Common myeloid progenitor, CD34-positive (primary cell): ENCODE measurements at regions of chr5 and their contacts with region 1.

Region 1: DNA sequence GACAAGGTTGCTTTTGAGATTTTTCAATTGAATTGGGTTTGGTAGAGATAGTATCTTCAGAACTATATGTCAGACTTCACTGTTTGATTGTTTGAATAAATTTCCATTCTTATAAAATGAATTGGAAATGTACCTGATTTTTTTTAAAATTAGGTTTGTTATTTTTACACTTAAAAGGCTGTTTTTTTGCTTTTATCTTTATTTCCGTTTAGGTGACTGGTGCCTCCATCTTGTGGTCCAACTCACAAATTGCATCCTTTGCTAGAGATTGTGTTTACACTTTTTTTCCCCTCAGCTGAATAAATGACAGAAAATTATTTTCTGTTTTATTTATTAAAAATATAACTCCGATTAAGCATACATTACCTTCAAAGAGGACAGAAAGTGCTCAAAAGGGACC is 15.6 kb downstream of the NDUFAF2 start:
- DNase-seq: peak; percentile 29 to 63 (median 55)
- H3K4me3 ChIP-seq: no peak overlapping the region
- H3K27ac ChIP-seq: no peak overlapping the region
- H3K4me1 ChIP-seq: peaks cover 0 to 5% (median 0%) of the 10 kb centered on the region in 4 experiments
- H3K27me3 ChIP-seq: no peaks in the 10 kb centered on the region

Region 2: GRCh38 chr5:60944904-60945812 is 15.4 kb before region 1 on chr5 and contains the starts of genes ERCC8 and NDUFAF2:
- CTCF ChIA-PET with region 1: interaction called, 18 read pairs
- POLR2A ChIA-PET with region 1: no interaction called
- DNase-seq: peak; percentile 89 to 96 (median 95)
- H3K4me3 ChIP-seq: peak within 1 kb of the TSS; percentile 71 to 99 (median 96)
- H3K27ac ChIP-seq: peak within 1 kb of the TSS; percentile 67 to 84
- H3K4me1 ChIP-seq: peaks cover 16 to 25% (median 21%) of the 10 kb centered on the region in 4 experiments
- H3K27me3 ChIP-seq: no peaks in the 10 kb centered on the region

Region 3: DNA sequence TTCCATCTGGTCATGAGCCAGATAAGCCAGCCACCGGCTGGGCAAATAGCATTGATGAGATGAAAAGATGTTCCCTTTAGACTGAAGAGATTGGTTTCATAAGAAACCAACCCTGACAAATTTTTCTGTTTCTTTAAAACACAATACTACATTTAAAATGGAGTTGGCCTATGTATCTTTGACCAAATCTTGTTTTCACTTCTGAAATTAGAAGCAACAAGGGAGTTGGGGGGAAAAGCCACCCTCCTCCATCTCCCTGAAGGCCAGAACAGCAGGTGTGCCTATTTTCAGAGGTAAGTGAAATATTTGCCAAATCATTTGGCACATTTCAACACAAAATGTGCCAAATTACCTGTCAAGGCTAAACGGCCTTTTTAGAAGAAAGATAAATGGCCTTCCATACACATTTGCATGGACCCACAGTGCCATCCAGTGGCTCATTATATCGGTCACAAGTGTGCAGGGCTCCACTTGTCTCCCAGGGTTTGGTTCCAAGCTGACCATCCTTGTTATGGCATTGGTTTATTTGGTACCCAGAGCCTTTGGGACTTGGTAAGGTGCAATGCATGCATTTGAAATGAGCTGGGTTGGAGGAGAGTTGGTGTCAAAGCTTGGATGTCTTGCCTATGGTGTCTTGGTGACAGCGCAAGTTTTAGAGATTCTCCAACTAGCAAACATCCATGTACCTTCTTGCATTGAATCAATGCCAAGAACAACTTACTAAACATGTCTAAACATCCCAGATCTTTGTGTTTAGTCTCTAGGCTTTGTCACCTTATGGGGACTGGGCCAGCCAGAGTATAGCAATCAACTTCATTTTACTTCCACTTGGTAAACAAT is 973.4 kb after region 1 on chr5:
- CTCF ChIA-PET with region 1: interaction called, 11 read pairs
- POLR2A ChIA-PET with region 1: no interaction called
- DNase-seq: peak; percentile 64 to 83 (median 77)
- H3K4me3 ChIP-seq: peak overlapping the region in 3 of 7 experiments; percentile 22 to 59 (median 25)
- H3K27ac ChIP-seq: no peak overlapping the region
- H3K4me1 ChIP-seq: peaks cover 0 to 3% (median 0%) of the 10 kb centered on the region in 4 experiments
- H3K27me3 ChIP-seq: no peaks in the 10 kb centered on the region